Common myeloid progenitor, CD34-positive (primary cell): ENCODE measurements at regions of chr3 and their contacts with region 1.

Region 1: DNA sequence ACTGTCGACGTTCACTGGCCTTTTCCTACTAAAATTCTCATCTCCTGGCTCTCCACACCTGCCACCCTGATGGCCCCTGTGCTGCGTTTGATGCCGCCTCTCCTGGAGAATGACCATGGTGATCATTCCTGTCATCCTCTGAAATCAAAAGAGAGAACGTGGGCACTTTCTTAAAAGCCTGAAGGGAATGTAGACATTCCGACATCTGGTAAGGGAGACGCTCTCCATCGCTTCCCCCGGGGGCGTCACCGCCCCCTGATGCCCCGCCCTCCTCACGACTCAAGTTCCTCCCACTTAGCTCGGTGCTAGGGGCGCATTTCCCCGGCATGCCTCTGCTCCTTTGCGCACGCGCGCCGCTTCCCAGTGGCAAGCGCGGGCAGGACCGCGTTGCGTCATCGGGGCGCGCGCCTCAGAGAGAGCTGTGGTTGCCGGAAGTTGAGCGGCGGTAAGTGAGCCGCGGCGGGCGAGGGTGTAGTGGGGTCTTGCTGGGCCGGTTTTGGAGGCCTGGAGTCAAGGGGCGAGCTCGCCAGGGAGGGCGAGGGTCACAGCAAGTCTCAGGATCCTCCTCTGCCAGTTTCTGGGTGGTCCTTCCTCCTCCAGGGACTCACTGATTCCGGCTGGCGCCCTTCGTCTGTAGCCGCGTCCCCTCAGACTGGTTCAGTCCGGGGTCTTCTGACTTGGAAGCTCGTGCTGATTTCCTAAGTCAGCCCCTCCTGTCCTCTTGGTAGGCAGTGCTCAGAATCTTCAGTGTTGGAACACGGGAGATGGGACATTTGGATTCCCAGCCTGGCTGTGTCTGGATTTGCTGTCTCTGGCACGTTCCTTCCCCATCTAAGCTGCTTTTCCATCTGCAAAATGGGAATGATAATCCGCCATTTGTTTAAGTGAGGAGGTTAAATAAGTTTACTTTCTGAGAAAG is at the start of gene ATG7:
- DNase-seq: peak; percentile 96 to 98 (median 98)
- H3K4me3 ChIP-seq: peak within 1 kb of the TSS; percentile 81 to 99 (median 95)
- H3K27ac ChIP-seq: peak within 1 kb of the TSS; percentile 96 to 97
- H3K4me1 ChIP-seq: peaks cover 9 to 18% (median 12%) of the 10 kb centered on the region in 4 experiments
- H3K27me3 ChIP-seq: peaks cover 0 to 4% (median 0%) of the 10 kb centered on the region in 5 experiments

Region 2: GRCh38 chr3:11288786-11289682 is 16.8 kb after region 1 on chr3:
- CTCF ChIA-PET with region 1: interaction called, 12 read pairs
- POLR2A ChIA-PET with region 1: interaction called, 10 read pairs
- DNase-seq: peak; percentile 81 to 96 (median 93)
- H3K4me3 ChIP-seq: peak overlapping the region in 3 of 7 experiments; percentile 5 to 38 (median 23)
- H3K27ac ChIP-seq: peak overlapping the region; percentile 86 to 89
- H3K4me1 ChIP-seq: peaks cover 14 to 47% (median 23%) of the 10 kb centered on the region in 4 experiments
- H3K27me3 ChIP-seq: no peaks in the 10 kb centered on the region